Vagina (tissue), 2 donors: ENCODE measurements at regions of chr11 and their contacts with region 1.

Region 1: GRCh38 chr11:69642913-69643632 is 2.1 kb downstream of the CCND1 start:
- DNase-seq: no peak
- H3K4me3 ChIP-seq: peak overlapping the region; percentile 66 to 77
- H3K27ac ChIP-seq: peak overlapping the region; percentile 85
- H3K4me1 ChIP-seq: peaks cover 60% of the 10 kb centered on the region
- H3K27me3 ChIP-seq: no peaks in the 10 kb centered on the region
- CTCF ChIP-seq: peak; percentile 50 to 96 (median 89)
- POLR2A ChIP-seq: no peak

Region 2: GRCh38 chr11:69102732-69103615 is 540.1 kb before region 1 on chr11:
- intact Hi-C with region 1: loop called (anchors 1 kb)
- DNase-seq: no peak
- H3K4me3 ChIP-seq: no peak overlapping the region
- H3K27ac ChIP-seq: no peak overlapping the region
- H3K4me1 ChIP-seq: peaks cover 26% of the 10 kb centered on the region
- H3K27me3 ChIP-seq: no peaks in the 10 kb centered on the region
- CTCF ChIP-seq: no peak
- POLR2A ChIP-seq: no peak

Region 3: DNA sequence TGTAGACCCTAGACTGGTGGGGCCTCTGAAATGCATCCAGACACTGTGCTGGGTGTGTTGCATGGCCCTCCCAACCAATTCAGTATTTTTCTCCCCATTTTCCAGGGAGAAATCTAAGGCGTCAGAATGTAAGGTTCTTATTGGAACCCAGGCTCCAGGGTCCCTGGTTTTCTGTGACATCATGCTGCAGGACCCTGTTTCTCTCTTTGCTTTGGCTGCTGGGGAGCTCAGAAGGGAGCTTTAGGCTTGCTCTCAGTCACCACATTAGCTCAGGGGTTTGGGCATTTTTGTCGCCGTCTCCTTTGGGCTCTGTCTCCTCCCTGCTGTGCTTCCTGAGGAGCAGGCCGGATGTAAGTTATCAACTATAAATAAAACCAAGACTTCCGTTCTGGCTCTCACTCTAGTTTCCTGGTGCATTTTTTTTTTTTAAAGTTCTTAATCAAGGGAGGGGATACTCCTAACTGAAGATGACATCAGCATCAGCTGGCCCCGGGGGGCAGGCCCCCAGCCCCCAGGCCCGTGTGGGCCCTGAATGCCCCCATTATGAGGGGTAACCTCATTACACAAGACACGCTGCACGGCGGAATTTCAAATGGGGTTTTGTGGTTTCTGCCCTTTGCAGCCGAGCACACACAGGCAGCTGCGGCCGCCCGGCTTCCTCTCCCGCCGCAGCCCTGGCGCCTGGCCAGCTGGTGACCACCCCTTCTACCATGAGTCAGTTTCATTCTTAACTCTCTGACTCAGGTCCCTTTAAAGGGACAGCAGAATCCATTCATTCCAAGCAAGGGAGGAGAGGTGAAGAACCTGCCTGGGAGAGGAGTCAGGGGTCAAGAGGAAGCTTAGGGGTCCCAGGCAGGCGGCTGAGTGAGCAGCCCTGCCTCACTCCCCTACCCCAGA is 345.9 kb before region 1 on chr11:
- intact Hi-C with region 1: loop called (anchors 5 kb)
- DNase-seq: no peak
- H3K4me3 ChIP-seq: peak overlapping the region; percentile 15 to 32
- H3K27ac ChIP-seq: peak overlapping the region; percentile 21
- H3K4me1 ChIP-seq: peaks cover 63% of the 10 kb centered on the region
- H3K27me3 ChIP-seq: no peaks in the 10 kb centered on the region
- CTCF ChIP-seq: no peak
- POLR2A ChIP-seq: no peak